Psoas muscle (tissue), 8 donors: ENCODE measurements at regions of chr7 and their contacts with region 1.

Region 1: DNA sequence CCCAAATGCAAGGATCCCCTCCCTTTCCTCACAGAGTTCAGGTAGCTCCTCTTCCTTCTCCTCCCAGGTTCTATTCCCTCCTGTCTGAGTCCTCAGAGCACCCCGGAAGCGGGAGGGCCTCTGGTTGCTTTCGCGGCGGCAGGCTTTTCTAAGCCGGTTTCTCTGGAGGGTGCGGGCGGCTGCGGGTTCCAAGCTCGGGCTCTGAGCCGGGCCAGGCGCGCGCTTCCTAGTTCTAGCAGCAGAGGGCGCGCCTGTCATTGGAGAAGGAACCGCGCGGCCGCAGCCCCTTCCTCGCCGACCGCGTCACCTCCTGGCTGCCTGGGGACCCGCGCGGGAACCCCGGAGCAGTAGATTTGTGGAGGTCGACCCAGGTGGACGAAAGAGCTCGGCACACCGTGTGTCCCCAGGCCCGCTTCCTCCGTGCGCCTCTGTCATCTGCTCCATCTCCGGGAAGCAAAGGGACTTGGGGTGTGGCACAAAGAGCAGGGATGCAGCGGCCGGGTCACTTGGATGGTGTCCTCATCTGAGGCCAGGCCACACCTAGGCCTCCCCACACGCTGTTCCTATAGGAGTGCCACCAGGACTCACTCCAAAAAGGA is 389.0 kb upstream of the PODXL start:
- DNase-seq: peak; percentile 52 to 68
- ATAC-seq: peak; percentile 62 to 91 (median 76)
- H3K4me3 ChIP-seq: peak overlapping the region; percentile 50
- H3K27ac ChIP-seq: no peak overlapping the region
- H3K4me1 ChIP-seq: peaks cover 8% of the 10 kb centered on the region
- H3K27me3 ChIP-seq: no peaks in the 10 kb centered on the region
- CTCF ChIP-seq: peak; percentile 85

Region 2: GRCh38 chr7:131974671-131975070 is 29.3 kb after region 1 on chr7:
- intact Hi-C with region 1: no loop called
- DNase-seq: no peak
- ATAC-seq: no peak
- H3K4me3 ChIP-seq: no peak overlapping the region
- H3K27ac ChIP-seq: no peak overlapping the region
- H3K4me1 ChIP-seq: no peaks in the 10 kb centered on the region
- H3K27me3 ChIP-seq: no peaks in the 10 kb centered on the region
- CTCF ChIP-seq: no peak

Region 3: GRCh38 chr7:132004536-132005272 is 59.3 kb after region 1 on chr7:
- intact Hi-C with region 1: loop called in 1 of 2 experiments (anchors 10 kb)
- DNase-seq: peak in 1 of 2 donors; percentile 18
- ATAC-seq: peak; percentile 44 to 92 (median 88)
- H3K4me3 ChIP-seq: no peak overlapping the region
- H3K27ac ChIP-seq: no peak overlapping the region
- H3K4me1 ChIP-seq: no peaks in the 10 kb centered on the region
- H3K27me3 ChIP-seq: no peaks in the 10 kb centered on the region
- CTCF ChIP-seq: peak; percentile 41

Region 4: GRCh38 chr7:132154248-132154647 is 208.8 kb after region 1 on chr7:
- intact Hi-C with region 1: loop called (anchors 5 kb)
- DNase-seq: no peak
- ATAC-seq: peak in 1 of 4 donors; percentile 66
- H3K4me3 ChIP-seq: no peak overlapping the region
- H3K27ac ChIP-seq: no peak overlapping the region
- H3K4me1 ChIP-seq: no peaks in the 10 kb centered on the region
- H3K27me3 ChIP-seq: no peaks in the 10 kb centered on the region
- CTCF ChIP-seq: peak; percentile 15

Region 5: GRCh38 chr7:132250883-132251653 is 305.7 kb after region 1 on chr7:
- intact Hi-C with region 1: loop called (anchors 2 to 5 kb)
- DNase-seq: peak; percentile 62 to 85
- ATAC-seq: peak; percentile 78 to 94 (median 90)
- H3K4me3 ChIP-seq: no peak overlapping the region
- H3K27ac ChIP-seq: no peak overlapping the region
- H3K4me1 ChIP-seq: peaks cover 17% of the 10 kb centered on the region
- H3K27me3 ChIP-seq: no peaks in the 10 kb centered on the region
- CTCF ChIP-seq: no peak

Region 6: GRCh38 chr7:132580717-132581285 is 635.4 kb after region 1 on chr7:
- intact Hi-C with region 1: loop called (anchors 5 to 10 kb)
- DNase-seq: peak; percentile 73 to 76
- ATAC-seq: peak; percentile 74 to 85 (median 78)
- H3K4me3 ChIP-seq: no peak overlapping the region
- H3K27ac ChIP-seq: no peak overlapping the region
- H3K4me1 ChIP-seq: peaks cover 4% of the 10 kb centered on the region
- H3K27me3 ChIP-seq: peaks cover 0 to 10% (median 4%) of the 10 kb centered on the region in 3 donors
- CTCF ChIP-seq: peak; percentile 71